ENCODE measurements at regions of chr6 and their contacts with region 1.

Region 1: DNA sequence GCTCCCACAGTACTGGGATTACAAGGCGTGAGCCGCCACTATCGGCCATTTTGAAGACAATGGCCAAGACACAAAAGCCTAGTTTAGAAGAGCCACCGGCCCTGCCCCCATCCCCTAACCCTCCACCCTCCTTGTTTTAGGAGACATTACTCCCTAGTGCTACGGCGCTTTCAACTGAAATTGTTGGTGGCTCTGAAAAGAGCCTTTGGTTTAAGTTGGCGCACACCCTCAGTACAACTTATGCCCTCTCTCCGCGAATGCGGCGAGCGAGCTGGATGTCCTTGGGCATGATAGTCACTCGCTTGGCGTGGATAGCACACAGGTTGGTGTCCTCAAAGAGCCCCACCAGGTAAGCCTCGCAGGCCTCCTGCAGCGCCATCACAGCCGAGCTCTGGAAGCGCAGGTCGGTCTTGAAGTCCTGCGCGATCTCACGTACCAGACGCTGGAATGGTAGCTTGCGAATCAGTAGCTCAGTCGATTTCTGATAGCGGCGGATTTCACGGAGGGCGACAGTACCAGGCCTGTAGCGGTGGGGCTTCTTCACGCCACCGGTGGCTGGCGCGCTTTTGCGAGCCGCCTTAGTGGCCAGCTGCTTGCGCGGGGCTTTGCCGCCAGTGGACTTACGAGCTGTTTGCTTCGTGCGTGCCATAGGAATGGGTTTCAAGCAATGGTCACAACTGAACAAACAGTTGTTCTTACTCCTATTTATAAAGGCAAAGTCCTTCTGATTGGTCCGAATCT is 114.9 kb upstream of the BTN3A2 start:
- DNase-seq: peak; percentile 53 to 85 (median 80)
- ATAC-seq: peak; percentile 85
- H3K4me3 ChIP-seq: peak overlapping the region; percentile 84
- H3K4me3 Mint-ChIP-seq: peak overlapping the region; percentile 88 to 100 (median 96)
- H3K27ac ChIP-seq: peak overlapping the region; percentile 71
- H3K27ac Mint-ChIP-seq: peak overlapping the region; percentile 85 to 97 (median 94)
- H3K4me1 ChIP-seq: peaks cover 4 to 19% of the 10 kb centered on the region in 2 donors
- H3K4me1 Mint-ChIP-seq: peaks cover 20 to 48% (median 39%) of the 10 kb centered on the region in 7 donors
- H3K27me3 ChIP-seq: no peaks in the 10 kb centered on the region
- H3K27me3 Mint-ChIP-seq: no peaks in the 10 kb centered on the region

Region 2: GRCh38 chr6:26204332-26205165 is 45.6 kb before region 1 on chr6:
- CTCF ChIA-PET with region 1: interaction called, 3 read pairs
- POLR2A ChIA-PET with region 1: interaction called, 103 read pairs
- intact Hi-C with region 1: loop called (anchors 1 kb)
- DNase-seq: peak; percentile 67 to 95 (median 89)
- ATAC-seq: peak; percentile 72
- H3K4me3 ChIP-seq: peak overlapping the region; percentile 77
- H3K4me3 Mint-ChIP-seq: no peak overlapping the region
- H3K27ac ChIP-seq: peak overlapping the region; percentile 90
- H3K27ac Mint-ChIP-seq: no peak overlapping the region
- H3K4me1 ChIP-seq: peaks cover 20 to 23% of the 10 kb centered on the region in 2 donors
- H3K4me1 Mint-ChIP-seq: peaks cover 9 to 36% (median 26%) of the 10 kb centered on the region in 7 donors
- H3K27me3 ChIP-seq: no peaks in the 10 kb centered on the region
- H3K27me3 Mint-ChIP-seq: peaks cover 0 to 5% (median 0%) of the 10 kb centered on the region in 5 donors

Region 3: GRCh38 chr6:26223650-26224546 is 26.2 kb before region 1 on chr6:
- CTCF ChIA-PET with region 1: interaction called, 9 read pairs
- POLR2A ChIA-PET with region 1: interaction called, 14 read pairs
- intact Hi-C with region 1: loop called in 1 of 2 experiments (anchors 1 kb)
- DNase-seq: peak in 7 of 9 donors; percentile 79 to 89 (median 84)
- ATAC-seq: peak; percentile 93
- H3K4me3 ChIP-seq: peak overlapping the region; percentile 77
- H3K4me3 Mint-ChIP-seq: no peak overlapping the region
- H3K27ac ChIP-seq: peak overlapping the region; percentile 77
- H3K27ac Mint-ChIP-seq: no peak overlapping the region
- H3K4me1 ChIP-seq: peaks cover 14 to 18% of the 10 kb centered on the region in 2 donors
- H3K4me1 Mint-ChIP-seq: peaks cover 10 to 25% (median 18%) of the 10 kb centered on the region in 7 donors
- H3K27me3 ChIP-seq: no peaks in the 10 kb centered on the region
- H3K27me3 Mint-ChIP-seq: no peaks in the 10 kb centered on the region

Region 4: DNA sequence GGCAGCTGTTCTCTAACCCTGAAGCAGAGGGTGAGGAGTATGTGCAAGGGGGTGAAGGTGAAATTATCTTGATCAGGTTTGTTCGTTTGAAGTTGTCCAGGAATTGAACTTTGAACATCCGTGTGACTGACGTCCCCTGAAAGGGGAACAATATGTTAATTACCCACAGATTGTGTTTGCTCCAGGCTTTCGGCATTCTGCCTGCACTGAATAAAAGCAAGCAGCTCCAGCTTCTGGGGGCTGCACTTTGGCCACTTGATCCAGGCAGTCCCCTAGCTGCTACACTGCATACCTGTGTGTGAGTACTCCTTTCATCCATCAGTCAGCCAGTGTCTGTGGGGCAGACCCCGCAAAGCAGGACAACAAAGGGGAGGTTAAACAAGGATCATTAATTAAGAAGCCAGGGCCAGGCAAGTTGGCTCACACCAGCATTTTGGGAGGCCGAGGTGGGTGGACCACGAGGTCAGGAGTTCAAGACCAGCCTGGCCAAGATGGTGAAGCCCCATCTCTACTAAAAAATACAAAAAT is 10.0 kb after region 1 on chr6:
- CTCF ChIA-PET with region 1: no interaction called
- POLR2A ChIA-PET with region 1: no interaction called
- intact Hi-C with region 1: no loop called
- DNase-seq: no peak
- ATAC-seq: no peak
- H3K4me3 ChIP-seq: no peak overlapping the region
- H3K4me3 Mint-ChIP-seq: no peak overlapping the region
- H3K27ac ChIP-seq: no peak overlapping the region
- H3K27ac Mint-ChIP-seq: no peak overlapping the region
- H3K4me1 ChIP-seq: no peaks in the 10 kb centered on the region
- H3K4me1 Mint-ChIP-seq: peaks cover under 1 to 13% (median 5%) of the 10 kb centered on the region in 7 donors
- H3K27me3 ChIP-seq: no peaks in the 10 kb centered on the region
- H3K27me3 Mint-ChIP-seq: no peaks in the 10 kb centered on the region

Region 5: DNA sequence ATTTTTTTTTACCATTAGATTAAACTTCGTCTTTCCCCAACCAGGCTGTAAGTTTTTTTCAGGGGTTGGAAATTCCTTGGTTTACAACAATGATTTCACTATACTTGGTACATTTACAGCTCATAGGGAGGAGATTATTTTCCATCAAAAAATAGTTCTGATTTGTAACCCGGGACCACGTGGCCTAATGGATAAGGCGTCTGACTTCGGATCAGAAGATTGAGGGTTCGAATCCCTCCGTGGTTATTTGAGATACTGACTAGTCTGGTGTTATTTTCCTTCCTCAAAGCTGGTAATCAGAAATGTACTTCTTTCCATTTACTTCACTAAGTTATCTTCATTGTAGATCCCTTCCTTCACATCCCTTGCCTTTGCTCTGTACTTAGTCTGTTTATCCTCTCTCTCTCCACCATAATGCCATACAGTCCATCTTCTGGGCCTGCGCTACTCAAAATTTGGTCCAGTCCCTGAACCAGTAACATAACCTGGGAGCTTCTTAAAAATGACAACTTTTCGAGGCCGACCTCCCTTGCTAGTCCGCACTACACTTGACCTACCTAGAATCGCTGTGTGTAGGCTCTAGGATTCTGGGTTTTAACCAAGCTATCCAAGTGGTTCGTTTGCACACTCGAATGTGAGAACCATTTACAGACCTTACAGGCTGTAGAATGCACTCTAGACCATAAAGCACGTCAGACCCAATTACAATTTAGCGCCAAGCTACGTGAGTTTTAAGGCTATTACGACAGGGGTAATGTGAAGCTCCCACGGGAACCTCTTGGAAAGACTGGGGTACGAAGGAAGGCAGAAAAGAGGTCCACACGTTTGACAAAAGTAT is 72.7 kb after region 1 on chr6:
- CTCF ChIA-PET with region 1: no interaction called
- POLR2A ChIA-PET with region 1: interaction called, 16 read pairs
- intact Hi-C with region 1: no loop called
- DNase-seq: peak in 8 of 9 donors; percentile 67 to 85 (median 79)
- ATAC-seq: peak; percentile 72
- H3K4me3 ChIP-seq: peak overlapping the region; percentile 82
- H3K4me3 Mint-ChIP-seq: peak overlapping the region; percentile 64 to 92 (median 88)
- H3K27ac ChIP-seq: peak overlapping the region; percentile 60
- H3K27ac Mint-ChIP-seq: peak overlapping the region; percentile 44 to 93 (median 89)
- H3K4me1 ChIP-seq: peaks cover 5 to 8% of the 10 kb centered on the region in 2 donors
- H3K4me1 Mint-ChIP-seq: peaks cover 2 to 58% (median 36%) of the 10 kb centered on the region in 7 donors
- H3K27me3 ChIP-seq: no peaks in the 10 kb centered on the region
- H3K27me3 Mint-ChIP-seq: peaks cover 5 to 21% (median 17%) of the 10 kb centered on the region in 5 donors